Left colon (tissue), 2 donors: ENCODE measurements at regions of chr2 and their contacts with region 1.

Region 1: GRCh38 chr2:117835990-117836760 is 21.7 kb downstream of the DDX18 start:
- DNase-seq: peak; percentile 67 to 83
- ATAC-seq: peak; percentile 95

Region 2: DNA sequence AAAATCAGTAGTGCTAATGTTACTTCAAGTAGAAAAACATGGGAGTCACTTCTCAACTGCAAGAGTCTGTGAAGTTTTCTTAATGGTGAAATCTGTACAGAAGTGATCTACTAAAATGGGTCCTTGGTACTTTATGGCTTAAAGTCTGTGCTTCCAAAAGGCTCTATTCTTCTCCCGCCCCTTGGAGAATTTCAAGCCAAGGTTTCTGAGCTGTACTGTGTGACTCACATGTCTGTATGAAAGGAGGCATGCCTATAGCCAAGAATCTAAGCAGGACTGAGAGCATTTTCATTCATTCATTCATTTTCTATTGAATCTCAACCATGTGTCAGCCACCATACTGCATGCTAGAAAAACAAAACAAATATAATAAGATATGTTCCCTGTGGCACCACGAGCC is 41.5 kb before region 1 on chr2:
- intact Hi-C with region 1: no loop called
- DNase-seq: no peak
- ATAC-seq: no peak

Region 3: GRCh38 chr2:117918608-117919007 is 82.4 kb after region 1 on chr2:
- intact Hi-C with region 1: no loop called
- DNase-seq: peak; percentile 12 to 37
- ATAC-seq: no peak

Region 4: GRCh38 chr2:118003396-118003824 is 167.2 kb after region 1 on chr2:
- intact Hi-C with region 1: loop called in 1 of 2 experiments (anchors 5 kb)
- DNase-seq: peak in 1 of 2 donors; percentile 25
- ATAC-seq: peak; percentile 96

Region 5: DNA sequence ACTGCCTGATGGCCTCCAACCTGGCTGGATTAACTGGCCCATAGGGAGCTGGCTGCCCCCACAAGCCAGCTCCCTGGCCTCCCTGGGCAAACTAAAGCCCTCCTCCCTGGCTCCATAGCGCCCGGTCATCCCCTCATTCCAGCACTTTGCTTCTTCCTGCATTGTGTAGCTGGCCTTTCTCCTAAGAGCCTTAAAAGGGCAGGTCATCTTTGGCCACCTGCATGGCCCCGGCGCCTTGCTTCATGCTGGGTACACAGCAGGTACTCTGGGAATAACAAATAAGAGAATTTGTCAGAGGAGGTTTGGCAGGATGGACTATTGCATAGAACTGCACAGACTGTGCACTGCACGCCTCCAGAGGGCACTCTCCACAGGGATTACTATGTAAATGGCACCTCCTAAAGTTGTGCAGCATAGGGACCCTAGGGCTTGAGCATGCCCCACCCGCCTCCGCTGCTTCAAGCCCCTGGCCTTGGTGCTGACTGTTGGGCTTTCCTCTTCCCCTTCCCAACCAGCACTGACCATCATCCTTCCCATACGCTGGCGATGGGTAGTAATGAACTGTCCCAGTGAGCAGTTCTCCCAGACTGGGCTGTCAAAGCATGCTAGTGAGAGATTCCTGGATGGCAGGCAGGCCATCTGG is 1398.3 kb after region 1 on chr2:
- intact Hi-C with region 1: no loop called
- DNase-seq: no peak
- ATAC-seq: peak; percentile 54